Activated naive CD4-positive, alpha-beta T cell treated with anti-CD3 and anti-CD28 coated beads, Interleukin-2, amount 10 ng/mL, durations not matched to agents 7 days and 5 days (primary cell): ENCODE measurements at regions of chr1 and their contacts with region 1.

Region 1: DNA sequence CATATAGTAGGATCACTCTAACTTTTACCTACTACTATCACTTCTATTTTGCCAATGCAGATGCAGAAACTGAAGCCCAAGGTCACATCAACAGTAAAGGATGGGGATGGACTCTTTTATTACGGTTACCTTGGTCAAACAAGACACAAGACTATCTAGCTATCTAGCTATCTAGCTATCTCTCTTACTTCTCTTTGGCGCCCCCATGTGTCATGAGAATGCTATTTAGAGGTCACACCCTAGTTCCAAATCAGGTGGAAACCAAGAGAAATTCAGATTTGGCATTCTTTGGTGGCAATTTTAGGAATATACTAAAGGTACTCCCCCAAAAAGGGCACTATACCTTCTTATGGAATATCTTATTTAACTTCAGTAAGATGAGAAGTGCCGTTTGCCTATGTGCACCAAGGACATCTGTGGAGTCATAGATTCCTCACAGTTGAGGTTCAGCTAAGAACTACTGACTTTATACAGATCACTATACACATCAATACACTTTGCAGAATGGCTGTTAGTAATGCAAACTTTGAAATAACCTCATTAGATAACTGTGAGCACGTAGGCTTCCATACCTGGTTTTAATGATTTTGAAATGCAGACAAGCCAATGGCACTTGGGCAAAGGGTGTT is 6.7 kb downstream of the ZNF648 start:
- DNase-seq: peak; percentile 76
- H3K4me3 Mint-ChIP-seq: no peak overlapping the region
- H3K27ac Mint-ChIP-seq: no peak overlapping the region
- H3K4me1 Mint-ChIP-seq: peaks cover 22% of the 10 kb centered on the region
- H3K27me3 Mint-ChIP-seq: peaks cover 40% of the 10 kb centered on the region

Region 2: DNA sequence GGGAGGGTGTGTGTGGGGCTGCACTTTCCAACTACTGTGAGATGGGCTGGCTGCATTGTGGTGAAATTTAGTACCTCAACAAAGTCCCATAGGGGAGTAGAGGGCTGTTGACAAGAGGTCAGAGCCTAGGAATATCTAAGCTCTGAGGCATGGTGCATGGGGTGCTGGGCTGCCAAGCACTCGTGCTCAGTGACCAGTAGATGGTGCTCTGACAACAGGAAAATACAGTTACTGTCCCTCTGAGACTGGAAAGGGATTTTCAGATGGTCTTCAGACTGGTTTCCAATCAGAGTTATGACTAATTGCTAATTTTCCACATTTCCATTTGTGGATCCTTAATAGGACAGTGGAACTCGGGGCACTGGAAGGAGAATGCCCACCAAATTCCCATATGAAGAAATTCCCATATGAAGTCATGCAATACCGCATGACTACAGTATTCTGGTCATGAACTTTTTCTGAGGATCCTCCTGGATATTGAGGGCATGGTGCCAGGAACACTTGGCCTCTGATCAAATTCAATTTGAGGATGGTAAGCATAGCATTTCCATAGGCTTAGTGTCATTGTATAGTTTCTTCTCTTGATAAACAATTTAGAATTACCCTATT is 575.6 kb before region 1 on chr1:
- CTCF ChIA-PET with region 1: interaction called, 34 read pairs
- DNase-seq: peak; percentile 42
- H3K4me3 Mint-ChIP-seq: no peak overlapping the region
- H3K27ac Mint-ChIP-seq: no peak overlapping the region
- H3K4me1 Mint-ChIP-seq: peaks cover 15% of the 10 kb centered on the region
- H3K27me3 Mint-ChIP-seq: peaks cover 52% of the 10 kb centered on the region

Region 3: GRCh38 chr1:181778640-181779260 is 276.1 kb before region 1 on chr1:
- CTCF ChIA-PET with region 1: no interaction called
- DNase-seq: no peak
- H3K4me3 Mint-ChIP-seq: no peak overlapping the region
- H3K27ac Mint-ChIP-seq: no peak overlapping the region
- H3K4me1 Mint-ChIP-seq: no peaks in the 10 kb centered on the region
- H3K27me3 Mint-ChIP-seq: peaks cover 22% of the 10 kb centered on the region

Region 4: DNA sequence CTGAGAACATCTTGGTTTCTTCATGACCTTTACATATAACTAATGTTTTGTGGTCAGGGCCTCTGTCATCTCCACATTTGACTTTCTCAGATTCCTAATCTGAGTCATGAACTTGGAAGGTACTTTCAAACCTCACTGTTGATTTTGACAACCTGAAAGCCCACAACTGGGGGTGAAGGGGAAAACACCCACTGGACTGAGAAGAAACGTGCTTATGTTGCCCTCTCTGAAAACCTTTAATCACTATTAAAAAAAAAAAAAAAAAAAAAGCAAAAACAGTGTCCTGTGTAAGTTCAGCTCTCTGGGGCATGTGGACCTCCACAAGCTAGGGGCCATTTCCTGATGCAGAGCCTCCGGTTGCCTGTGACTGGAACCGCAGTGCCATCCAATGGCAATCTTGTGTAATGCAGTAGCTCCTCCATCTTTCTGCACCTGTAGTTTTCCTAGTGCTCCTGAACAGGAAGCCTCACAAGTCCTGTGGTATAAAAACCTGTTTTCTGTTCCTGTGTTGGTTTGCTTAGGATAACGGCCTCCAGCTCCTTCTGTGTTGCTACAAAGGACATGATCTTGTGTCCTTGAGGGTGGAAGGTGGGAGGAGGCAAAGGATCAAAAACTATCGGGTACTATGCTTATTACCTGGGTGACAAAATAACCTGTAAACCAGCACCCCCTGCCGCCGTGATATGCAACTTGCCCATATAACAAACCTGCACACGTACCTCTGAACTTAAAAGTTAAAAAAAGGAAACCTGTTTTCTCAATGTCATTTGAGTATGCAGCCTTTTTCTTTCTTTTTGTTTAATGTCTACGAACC is 117.8 kb before region 1 on chr1:
- CTCF ChIA-PET with region 1: interaction called, 49 read pairs
- DNase-seq: peak; percentile 60
- H3K4me3 Mint-ChIP-seq: no peak overlapping the region
- H3K27ac Mint-ChIP-seq: no peak overlapping the region
- H3K4me1 Mint-ChIP-seq: no peaks in the 10 kb centered on the region
- H3K27me3 Mint-ChIP-seq: peaks cover 3% of the 10 kb centered on the region

Region 5: DNA sequence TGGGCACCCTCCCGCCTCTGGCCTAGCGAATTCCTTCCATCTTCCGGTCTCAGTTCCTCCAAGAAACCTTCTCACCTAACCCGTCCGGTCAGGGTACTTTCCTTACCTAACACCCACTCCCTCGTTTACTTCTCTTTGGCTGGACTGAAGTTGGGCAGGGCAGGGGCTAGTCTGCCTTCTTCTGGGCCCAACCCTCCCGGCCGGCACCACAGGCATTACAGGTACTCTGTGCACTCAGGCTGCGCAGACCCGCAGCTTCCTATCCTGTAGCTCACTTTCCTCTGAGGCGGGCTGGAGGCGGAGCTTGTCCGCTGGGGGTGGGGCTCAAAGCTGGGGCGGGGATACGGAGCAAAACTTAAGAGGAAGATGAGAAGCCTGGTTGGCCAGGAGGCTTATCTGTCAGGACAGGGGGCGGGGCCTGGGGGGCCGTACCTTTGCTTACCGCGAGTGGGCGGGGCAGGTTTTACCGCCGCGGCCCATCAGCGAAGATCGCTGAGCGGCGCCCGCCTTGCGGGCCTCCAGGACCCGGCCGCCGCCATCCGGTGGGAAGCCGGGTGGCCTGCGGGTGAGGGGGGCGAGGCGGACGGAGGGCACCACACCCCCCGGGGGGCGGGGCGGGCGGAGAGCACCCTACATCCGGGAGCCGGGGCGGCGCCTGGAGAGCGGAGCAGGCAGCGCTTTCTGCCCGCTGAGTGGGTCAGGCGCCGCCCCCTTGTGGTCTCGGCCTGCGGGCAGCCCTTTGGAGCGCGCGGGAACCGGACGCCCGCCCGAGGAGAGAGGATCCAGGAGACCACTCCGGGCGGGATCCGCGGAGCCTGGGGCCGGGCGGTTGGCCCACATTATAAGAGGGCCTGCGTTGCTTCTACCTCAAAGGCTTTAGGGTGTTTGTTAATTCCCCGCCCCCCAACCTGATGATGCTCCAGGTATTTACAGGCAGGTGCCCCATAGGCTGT is 25.2 kb before region 1 on chr1:
- CTCF ChIA-PET with region 1: interaction called, 16 read pairs
- DNase-seq: peak; percentile 99
- H3K4me3 Mint-ChIP-seq: peak overlapping the region; percentile 90
- H3K27ac Mint-ChIP-seq: peak overlapping the region; percentile 96
- H3K4me1 Mint-ChIP-seq: peaks cover 15% of the 10 kb centered on the region
- H3K27me3 Mint-ChIP-seq: no peaks in the 10 kb centered on the region

Region 6: DNA sequence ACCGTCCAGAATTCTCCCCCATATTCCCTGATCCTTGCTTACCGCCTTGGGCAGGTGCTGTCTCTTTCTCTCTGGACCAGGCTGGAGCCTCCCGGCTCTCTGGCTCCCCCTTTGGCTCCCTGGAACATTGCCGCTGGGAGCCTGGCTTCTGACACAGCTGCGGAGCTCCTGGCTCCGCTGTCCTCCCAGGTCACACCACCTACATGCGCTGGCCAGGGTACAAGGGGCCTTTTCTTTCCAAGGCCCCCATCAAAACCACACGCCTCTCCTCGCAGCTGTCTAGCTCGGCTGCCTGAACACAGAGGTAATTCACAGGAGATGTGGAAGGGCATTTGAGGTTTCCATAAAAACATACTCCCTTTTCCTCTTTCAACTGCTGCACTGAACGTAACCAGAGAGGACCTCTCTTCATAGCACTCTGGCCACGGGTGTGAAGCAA is 14.2 kb after region 1 on chr1:
- CTCF ChIA-PET with region 1: interaction called, 11 read pairs
- DNase-seq: peak; percentile 61
- H3K4me3 Mint-ChIP-seq: no peak overlapping the region
- H3K27ac Mint-ChIP-seq: no peak overlapping the region
- H3K4me1 Mint-ChIP-seq: no peaks in the 10 kb centered on the region
- H3K27me3 Mint-ChIP-seq: peaks cover 41% of the 10 kb centered on the region